PC-3 (cell line): ENCODE measurements at regions of chr18 and their contacts with region 1.

Region 1: GRCh38 chr18:35478520-35479435 is 19.0 kb downstream of the INO80C start:
- DNase-seq: peak; percentile 83
- ATAC-seq: peak; percentile 91
- H3K4me3 ChIP-seq: peak overlapping the region; percentile 48
- H3K27ac ChIP-seq: peak overlapping the region; percentile 98
- H3K4me1 ChIP-seq: peaks cover 45% of the 10 kb centered on the region
- H3K27me3 ChIP-seq: no peaks in the 10 kb centered on the region
- CTCF ChIP-seq: no peak

Region 2: GRCh38 chr18:35322486-35323458 is 156.0 kb before region 1 on chr18:
- CTCF ChIA-PET with region 1: no interaction called
- POLR2A ChIA-PET with region 1: no interaction called
- intact Hi-C with region 1: no loop called
- DNase-seq: peak; percentile 9
- ATAC-seq: peak; percentile 97
- H3K4me3 ChIP-seq: no peak overlapping the region
- H3K27ac ChIP-seq: no peak overlapping the region
- H3K4me1 ChIP-seq: no peaks in the 10 kb centered on the region
- H3K27me3 ChIP-seq: no peaks in the 10 kb centered on the region
- CTCF ChIP-seq: no peak

Region 3: DNA sequence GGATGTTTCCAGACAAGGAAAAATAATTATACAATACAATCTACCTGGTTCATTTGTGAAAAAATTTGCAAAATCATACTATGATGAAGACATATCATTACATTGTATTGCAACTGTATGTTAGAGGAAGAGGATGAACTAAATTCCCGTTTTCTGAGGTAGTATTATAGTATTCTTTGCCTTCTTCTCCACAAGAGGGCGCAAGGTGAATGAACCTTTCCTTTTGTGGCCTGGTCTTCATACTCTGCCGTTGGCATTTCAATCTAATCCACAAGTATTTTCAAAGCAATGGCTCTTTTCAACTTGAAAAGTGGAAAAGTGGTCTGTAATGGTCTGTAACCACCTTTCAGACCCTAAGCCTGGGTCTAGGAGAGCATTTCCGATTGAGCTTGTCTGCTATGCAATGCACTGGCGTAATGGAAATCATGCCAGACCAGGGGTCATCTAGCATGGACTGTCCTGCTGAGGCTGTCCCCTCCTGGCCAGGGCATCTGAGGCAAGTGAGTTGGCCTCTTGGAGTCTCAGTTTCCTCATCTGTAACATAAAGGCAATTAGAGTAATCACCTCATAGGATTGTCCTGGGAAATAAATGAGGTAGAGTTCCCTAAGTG is 70.8 kb before region 1 on chr18:
- CTCF ChIA-PET with region 1: no interaction called
- POLR2A ChIA-PET with region 1: interaction called, 3 read pairs
- intact Hi-C with region 1: loop called (anchors 1 kb)
- DNase-seq: peak; percentile 64
- ATAC-seq: peak; percentile 59
- H3K4me3 ChIP-seq: no peak overlapping the region
- H3K27ac ChIP-seq: no peak overlapping the region
- H3K4me1 ChIP-seq: peaks cover 14% of the 10 kb centered on the region
- H3K27me3 ChIP-seq: no peaks in the 10 kb centered on the region
- CTCF ChIP-seq: peak; percentile 69

Region 4: DNA sequence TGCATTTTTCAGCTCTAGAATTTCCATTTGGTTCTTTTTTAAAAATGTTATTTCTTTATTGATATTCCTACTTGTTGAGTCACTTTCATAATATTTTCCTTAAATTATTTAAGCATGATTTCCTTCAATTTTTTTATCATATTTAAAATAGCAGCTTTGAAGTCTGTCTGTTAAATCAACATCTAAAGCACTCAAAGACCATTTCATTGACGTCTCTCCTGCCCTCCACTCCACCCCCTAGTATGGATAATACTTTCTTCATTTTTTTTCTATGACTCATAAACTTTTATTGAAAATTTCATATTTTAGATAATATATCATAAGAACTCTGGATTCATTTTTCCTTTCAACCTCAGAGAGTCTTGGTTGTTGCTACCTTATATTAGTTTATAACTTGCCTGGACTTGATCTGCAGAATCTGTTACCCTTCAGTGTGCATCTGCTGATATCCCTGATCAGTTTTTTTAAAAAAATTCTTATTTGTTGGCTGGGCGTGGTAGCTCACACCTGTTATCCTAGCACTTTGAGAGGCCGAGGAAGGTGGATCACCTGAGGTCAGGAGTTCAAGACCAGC is 42.6 kb before region 1 on chr18:
- CTCF ChIA-PET with region 1: no interaction called
- POLR2A ChIA-PET with region 1: interaction called, 13 read pairs
- intact Hi-C with region 1: loop called (anchors 2 kb)
- DNase-seq: peak; percentile 68
- ATAC-seq: peak; percentile 73
- H3K4me3 ChIP-seq: no peak overlapping the region
- H3K27ac ChIP-seq: peak overlapping the region; percentile 90
- H3K4me1 ChIP-seq: peaks cover 39% of the 10 kb centered on the region
- H3K27me3 ChIP-seq: no peaks in the 10 kb centered on the region
- CTCF ChIP-seq: no peak

Region 5: GRCh38 chr18:35459005-35459441 is 19.8 kb before region 1 on chr18:
- CTCF ChIA-PET with region 1: no interaction called
- POLR2A ChIA-PET with region 1: no interaction called
- intact Hi-C with region 1: loop called (anchors 2 kb)
- DNase-seq: peak; percentile 71
- ATAC-seq: peak; percentile 61
- H3K4me3 ChIP-seq: no peak overlapping the region
- H3K27ac ChIP-seq: peak overlapping the region; percentile 84
- H3K4me1 ChIP-seq: peaks cover 75% of the 10 kb centered on the region
- H3K27me3 ChIP-seq: no peaks in the 10 kb centered on the region
- CTCF ChIP-seq: no peak

Region 6: DNA sequence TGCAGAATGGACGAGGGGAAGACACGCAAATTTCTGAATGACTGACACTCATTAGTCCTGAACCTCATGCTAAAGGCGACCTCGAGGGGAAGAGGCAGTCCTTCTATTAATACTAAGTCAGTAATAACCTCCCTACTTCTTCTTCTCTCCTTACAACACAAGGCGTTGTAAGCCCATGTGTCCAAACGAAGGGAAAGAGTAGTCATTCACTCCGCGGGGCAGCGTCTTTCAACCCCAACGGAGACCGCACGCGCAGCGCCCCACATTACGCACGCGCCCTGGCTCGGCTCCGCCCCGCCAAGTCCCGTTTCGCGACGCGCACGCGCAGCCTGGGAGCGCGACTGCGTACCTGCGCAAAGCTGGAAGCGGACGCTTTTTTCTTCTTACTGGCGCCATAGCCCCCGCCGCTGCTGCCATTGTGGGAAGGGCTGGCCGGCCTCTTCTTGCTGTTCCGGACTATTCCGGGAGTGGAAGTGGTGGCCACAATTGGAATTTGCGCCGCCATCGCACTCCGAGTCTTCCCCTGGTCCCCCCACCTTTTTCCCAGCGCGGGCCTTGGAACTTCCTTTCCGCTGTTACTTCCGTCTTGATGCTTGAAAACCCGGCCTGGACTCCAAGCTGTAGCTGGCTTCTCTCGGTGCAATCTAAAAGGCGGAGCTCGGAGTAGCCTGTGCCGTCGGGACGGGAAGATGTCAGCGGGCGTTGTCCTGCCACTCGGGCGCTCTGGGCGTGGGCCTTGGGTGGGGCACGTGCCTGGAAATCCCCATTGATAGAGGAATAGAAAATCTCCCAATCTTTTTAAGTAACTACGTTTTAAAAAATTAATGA is 18.8 kb after region 1 on chr18 and contains the start of gene INO80C:
- CTCF ChIA-PET with region 1: no interaction called
- POLR2A ChIA-PET with region 1: interaction called, 4 read pairs
- intact Hi-C with region 1: loop called (anchors 2 kb)
- DNase-seq: peak; percentile 75
- ATAC-seq: peak; percentile 89
- H3K4me3 ChIP-seq: peak within 1 kb of the TSS; percentile 74
- H3K27ac ChIP-seq: peak within 1 kb of the TSS; percentile 87
- H3K4me1 ChIP-seq: peaks cover 22% of the 10 kb centered on the region
- H3K27me3 ChIP-seq: no peaks in the 10 kb centered on the region
- CTCF ChIP-seq: no peak
- total RNA-seq, gene INO80C: 6.8 and 16.1 TPM in 2 replicates

Region 7: DNA sequence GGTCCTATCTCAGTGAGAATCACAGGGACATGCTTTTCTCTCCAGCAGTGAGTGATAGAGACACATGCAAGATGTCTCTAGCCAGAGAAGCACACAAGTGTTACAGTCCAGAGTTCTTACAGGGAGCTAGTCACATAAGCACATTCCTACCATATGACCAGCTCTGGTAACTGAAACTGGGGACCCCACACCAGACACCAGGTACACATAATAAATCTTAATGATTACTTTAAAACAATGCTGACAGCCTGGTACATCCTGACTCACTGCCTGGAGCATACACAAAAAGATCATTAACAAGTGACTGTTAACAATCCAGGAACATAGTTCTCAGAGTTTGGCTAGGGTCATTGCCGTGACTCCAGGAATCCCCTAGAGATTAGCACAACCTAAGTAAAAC is 156.4 kb after region 1 on chr18:
- CTCF ChIA-PET with region 1: no interaction called
- POLR2A ChIA-PET with region 1: no interaction called
- intact Hi-C with region 1: loop called (anchors 5 kb)
- DNase-seq: peak; percentile 43
- ATAC-seq: peak; percentile 72
- H3K4me3 ChIP-seq: no peak overlapping the region
- H3K27ac ChIP-seq: peak overlapping the region; percentile 69
- H3K4me1 ChIP-seq: peaks cover 27% of the 10 kb centered on the region
- H3K27me3 ChIP-seq: no peaks in the 10 kb centered on the region
- CTCF ChIP-seq: no peak